ENCODE measurements at regions of chr11 and their contacts with region 1.

Region 1: DNA sequence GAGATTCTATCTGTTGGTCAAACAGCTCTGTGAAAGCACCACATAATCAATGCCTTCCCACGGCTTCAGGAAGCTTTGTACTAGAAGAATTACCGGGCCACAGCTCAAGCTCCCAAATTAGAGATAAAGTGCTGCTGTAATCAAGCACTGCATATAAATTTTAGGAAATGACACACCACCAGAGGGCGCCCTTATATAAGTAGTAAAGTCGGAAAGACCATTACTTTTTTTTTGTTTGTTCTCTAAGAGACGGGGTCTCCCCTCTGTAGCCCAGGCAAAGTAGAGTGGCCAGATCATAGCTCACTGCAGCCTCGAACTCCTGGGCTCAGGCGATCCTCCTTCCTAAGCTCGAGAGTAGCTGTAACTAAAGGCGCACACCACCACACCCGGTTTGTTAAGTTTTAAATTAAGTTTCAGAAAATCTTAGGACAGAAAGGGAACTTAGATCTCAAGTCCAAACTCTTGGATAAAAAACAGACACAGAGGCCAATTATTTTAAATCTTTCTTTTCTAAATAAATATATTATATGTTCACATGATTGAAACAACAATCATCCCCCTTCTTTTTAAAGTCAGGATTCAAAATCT is 32.6 kb downstream of the PRCP start:
- DNase-seq: peak; percentile 62
- H3K4me3 ChIP-seq: no peak overlapping the region; a peak in 1 of 4 replicates
- H3K27ac ChIP-seq: no peak overlapping the region
- H3K4me1 ChIP-seq: peaks cover 0 to 7% of the 10 kb centered on the region in 2 experiments; a peak in 1 of 4 replicates
- H3K27me3 ChIP-seq: no peaks in the 10 kb centered on the region
- CTCF ChIP-seq: peak; percentile 78
- EP300 ChIP-seq: no peak
- RAD21 ChIP-seq: peak; percentile 82

Region 2: DNA sequence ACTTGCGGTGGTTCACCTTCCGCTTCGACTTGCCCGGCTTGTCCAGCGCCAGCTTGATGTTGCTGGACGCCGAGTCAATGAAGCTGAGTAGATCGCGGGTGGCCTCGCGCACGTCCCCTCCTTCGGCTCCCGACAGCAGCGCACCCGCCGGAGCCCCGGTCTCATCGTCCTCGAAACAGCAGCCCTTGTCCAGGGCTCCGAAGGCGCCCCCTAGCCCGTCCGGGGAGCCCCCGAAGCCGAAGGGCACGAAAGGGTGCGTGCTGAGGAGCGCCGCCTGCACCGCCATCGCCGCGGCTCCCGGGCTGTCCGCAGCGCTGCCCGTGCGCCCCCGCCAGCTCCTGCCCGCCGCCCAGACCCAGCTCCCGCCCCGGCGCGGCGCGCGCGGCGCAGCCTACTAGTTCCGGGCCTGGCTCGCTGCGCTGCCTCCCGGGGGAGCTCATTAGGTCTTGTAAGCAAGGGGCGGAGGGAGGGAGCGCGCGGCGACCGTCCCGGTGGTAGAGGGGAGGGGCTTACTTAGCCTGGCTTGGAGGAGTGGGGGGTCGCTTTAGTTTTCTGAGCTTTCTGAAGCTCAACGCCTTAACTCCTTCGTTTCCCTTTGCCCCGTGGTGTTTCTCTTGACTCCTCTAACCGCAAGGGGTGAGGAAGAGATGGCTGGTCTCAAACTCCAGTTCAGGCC is 134.0 kb before region 1 on chr11 and contains the start of gene FAM181B:
- CTCF ChIA-PET with region 1: interaction called, 16 read pairs
- POLR2A ChIA-PET with region 1: no interaction called
- DNase-seq: peak; percentile 89
- H3K4me3 ChIP-seq: peak within 1 kb of the TSS; percentile 46 to 54; a peak in 2 of 4 replicates
- H3K27ac ChIP-seq: peak within 1 kb of the TSS in 1 of 2 experiments; percentile 71; a peak in 2 of 4 replicates
- H3K4me1 ChIP-seq: peaks cover 0 to 4% of the 10 kb centered on the region in 2 experiments; a peak in 1 of 4 replicates
- H3K27me3 ChIP-seq: peaks cover 35% of the 10 kb centered on the region
- CTCF ChIP-seq: no peak
- EP300 ChIP-seq: no peak
- RAD21 ChIP-seq: 0 out of 2 replicates have a peak, but pooled peaks have one; percentile 0
- polyA plus RNA-seq, gene FAM181B: 0.02 and 0.06 TPM in 2 replicates

Region 3: GRCh38 chr11:82883853-82884252 is 16.3 kb after region 1 on chr11:
- CTCF ChIA-PET with region 1: interaction called, 43 read pairs
- POLR2A ChIA-PET with region 1: no interaction called
- DNase-seq: peak; percentile 43
- H3K4me3 ChIP-seq: no peak overlapping the region
- H3K27ac ChIP-seq: peak overlapping the region in 1 of 2 experiments; percentile 87; a peak in 3 of 4 replicates
- H3K4me1 ChIP-seq: peaks cover 0 to 12% of the 10 kb centered on the region in 2 experiments; a peak in 2 of 4 replicates
- H3K27me3 ChIP-seq: no peaks in the 10 kb centered on the region
- CTCF ChIP-seq: no peak
- EP300 ChIP-seq: no peak; a peak in 1 of 4 replicates
- RAD21 ChIP-seq: no peak

Region 4: DNA sequence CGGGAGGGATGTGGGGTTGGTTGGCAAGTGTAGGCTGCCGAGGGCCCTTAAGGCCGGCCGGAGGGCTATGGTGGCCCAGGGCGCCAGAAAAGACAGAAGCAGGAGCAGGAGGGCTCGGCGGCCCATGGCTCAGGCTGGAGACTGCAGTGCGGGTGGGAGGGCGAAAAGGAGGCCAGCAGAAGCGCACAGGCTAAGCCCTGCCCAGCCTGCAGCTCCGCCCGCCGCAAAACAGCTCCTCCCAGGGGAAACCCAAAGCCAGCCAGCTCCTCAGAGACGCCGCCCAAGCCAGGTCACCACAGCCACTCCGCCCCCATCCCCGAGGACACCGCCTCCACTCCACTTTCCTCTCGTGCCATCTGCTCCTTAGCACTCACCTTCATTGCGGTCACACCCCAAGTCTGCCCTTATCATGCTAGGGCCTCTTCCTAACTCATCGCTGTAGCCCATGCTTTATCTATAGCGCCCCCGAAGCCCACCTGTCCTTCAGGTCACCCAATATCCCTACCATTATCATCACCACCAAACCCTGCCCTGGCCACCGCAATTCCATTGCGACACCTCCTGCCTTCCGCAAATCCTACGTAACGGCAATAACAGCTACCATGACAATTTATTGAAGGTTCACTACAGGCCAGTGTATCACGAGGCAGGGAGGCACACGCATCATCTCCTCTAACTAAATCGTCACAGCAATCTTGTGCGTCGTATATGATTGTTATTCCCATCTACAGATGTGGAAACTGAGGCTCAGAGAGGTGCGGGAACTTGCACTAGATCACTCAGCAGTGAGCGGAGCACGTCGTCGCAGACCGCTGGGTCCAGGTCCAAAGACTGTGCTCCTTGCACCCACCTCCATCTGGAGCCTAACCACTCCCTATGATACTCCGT is 32.9 kb after region 1 on chr11 and contains the start of gene PRCP:
- CTCF ChIA-PET with region 1: interaction called, 40 read pairs
- POLR2A ChIA-PET with region 1: interaction called, 4 read pairs
- DNase-seq: peak; percentile 89
- H3K4me3 ChIP-seq: peak within 1 kb of the TSS; percentile 78 to 90
- H3K27ac ChIP-seq: peak within 1 kb of the TSS; percentile 70 to 95
- H3K4me1 ChIP-seq: peaks cover 0 to 24% of the 10 kb centered on the region in 2 experiments; a peak in 3 of 4 replicates
- H3K27me3 ChIP-seq: no peaks in the 10 kb centered on the region
- CTCF ChIP-seq: 0 out of 2 replicates have a peak, but pooled peaks have one; percentile 11
- EP300 ChIP-seq: no peak
- RAD21 ChIP-seq: 0 out of 2 replicates have a peak, but pooled peaks have one; percentile 2
- polyA plus RNA-seq, gene PRCP: 65.0 and 91.7 TPM in 2 replicates

Region 5: DNA sequence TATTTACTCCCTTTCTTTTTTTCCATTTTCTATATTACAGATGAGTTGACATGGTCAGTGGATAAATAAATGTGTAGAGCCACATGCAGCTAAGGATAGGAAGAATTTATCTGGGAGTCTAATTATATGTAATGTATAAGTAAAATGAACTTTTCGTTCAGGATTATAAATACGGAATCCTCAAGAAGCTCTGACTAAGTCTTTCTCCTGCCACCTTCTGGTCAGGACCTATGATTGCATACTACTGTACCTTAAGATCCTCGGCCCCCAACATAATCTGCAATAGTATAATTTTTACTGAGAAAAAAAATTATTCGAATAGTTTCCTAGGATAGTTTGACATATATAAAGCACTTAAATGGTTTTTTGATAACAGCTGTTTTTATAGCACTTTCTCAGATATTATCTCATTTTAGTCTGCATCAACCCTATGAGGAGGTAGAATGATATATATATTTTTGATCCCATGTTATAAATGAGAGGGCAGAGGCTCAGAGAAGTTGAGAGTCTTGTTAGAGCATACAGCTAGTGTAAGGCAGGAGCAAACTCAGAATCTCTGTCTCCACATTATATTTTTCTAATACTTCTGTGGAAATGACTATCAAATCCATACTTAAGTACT is 382.5 kb after region 1 on chr11:
- CTCF ChIA-PET with region 1: interaction called, 19 read pairs
- POLR2A ChIA-PET with region 1: no interaction called
- DNase-seq: peak; percentile 51
- H3K4me3 ChIP-seq: peak overlapping the region in 1 of 2 experiments; percentile 5; a peak in 1 of 4 replicates
- H3K27ac ChIP-seq: no peak overlapping the region
- H3K4me1 ChIP-seq: no peaks in the 10 kb centered on the region; a peak in 1 of 4 replicates
- H3K27me3 ChIP-seq: no peaks in the 10 kb centered on the region
- CTCF ChIP-seq: peak; percentile 78
- EP300 ChIP-seq: no peak
- RAD21 ChIP-seq: peak; percentile 72

Measured in SK-N-SH (cell line).